ENCODE measurements at regions of chr2 and their contacts with region 1.

Region 1: DNA sequence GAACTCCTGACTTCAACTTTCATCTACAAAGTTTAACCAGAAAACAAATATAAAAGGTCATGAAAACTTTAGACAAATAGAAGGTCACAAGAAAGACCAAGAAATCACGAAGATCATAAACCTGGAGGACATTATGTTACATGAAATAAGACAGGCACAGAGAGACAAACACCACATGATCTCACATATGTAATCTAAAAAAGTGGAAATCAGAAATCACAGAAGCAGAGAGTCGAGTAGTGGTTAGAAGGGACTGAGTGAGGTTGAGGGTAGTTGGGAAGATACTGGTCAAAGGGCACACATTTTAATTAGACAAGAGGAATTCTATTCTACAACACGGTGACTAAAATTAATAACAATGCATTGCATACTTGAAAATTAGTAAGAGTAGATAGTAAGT is 1.4 kb downstream of the GCFC2 start:
- DNase-seq: no peak
- ATAC-seq: no peak

Region 2: GRCh38 chr2:75654012-75654411 is 55.3 kb before region 1 on chr2:
- intact Hi-C with region 1: loop called (anchors 10 kb)
- DNase-seq: no peak
- ATAC-seq: no peak

Region 3: DNA sequence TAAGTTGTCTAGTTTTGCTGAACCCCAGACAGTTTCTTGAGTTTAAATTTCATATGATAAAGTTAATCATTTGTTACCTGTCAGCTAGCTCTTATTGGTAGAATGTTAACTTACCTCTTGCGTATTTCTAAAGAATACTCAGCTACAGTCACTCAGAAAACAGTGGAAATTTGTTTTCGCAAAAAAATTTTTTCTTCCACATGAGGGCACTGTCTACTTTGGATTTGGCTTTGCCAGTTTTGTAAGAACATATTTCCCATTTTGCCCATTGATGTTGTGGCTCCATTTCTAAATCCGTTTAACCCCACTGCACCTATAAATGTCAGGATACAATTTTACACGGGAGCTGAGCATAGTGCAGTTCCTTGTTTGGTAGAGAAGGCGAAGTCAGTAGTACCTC is 20.6 kb after region 1 on chr2:
- intact Hi-C with region 1: no loop called
- DNase-seq: no peak
- ATAC-seq: no peak